ENCODE measurements at regions of chr21 and their contacts with region 1.

Region 1: GRCh38 chr21:46060596-46061061 is 37.3 kb upstream of the COL6A2 start:
- DNase-seq: peak; percentile 71
- ATAC-seq: peak; percentile 62

Region 2: DNA sequence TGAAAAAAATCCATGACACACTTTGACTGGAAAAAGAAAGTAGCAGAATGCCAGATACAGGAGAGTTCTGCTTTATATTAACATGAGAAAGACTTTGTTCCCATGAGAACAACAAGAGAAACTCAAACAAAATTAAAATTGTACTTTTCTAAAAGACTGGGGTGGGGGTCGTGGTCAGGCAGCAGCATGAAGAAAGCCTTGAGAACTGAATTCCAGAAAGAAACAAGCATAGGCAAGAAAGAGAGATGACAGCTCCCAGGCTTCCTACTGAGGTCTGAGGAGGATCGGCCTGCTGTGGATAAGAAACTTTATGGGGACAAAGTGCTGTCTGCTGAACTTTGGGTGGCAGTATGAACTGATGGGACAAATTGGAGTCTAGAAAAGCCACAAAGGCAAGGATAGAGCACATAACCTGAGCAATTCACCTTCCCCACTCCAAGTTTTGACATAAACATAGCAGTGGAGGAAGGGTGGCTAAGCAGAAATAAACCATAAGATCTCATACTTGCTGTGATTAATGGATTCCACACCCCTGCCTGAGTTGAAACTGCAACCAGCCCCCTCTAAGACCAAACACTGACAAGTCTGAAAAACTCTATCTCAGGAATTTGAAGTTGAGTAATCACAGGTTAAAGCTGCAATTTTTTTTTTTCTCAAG is 35.4 kb before region 1 on chr21:
- intact Hi-C with region 1: loop called (anchors 5 kb)
- DNase-seq: no peak
- ATAC-seq: no peak

Region 3: GRCh38 chr21:46110499-46111192 is 50.0 kb after region 1 on chr21:
- intact Hi-C with region 1: loop called (anchors 2 kb)
- DNase-seq: peak; percentile 84
- ATAC-seq: peak; percentile 92

Measured in Right ventricle myocardium inferior (tissue), 1 donor.